ENCODE measurements at regions of chr1 and their contacts with region 1.

Region 1: DNA sequence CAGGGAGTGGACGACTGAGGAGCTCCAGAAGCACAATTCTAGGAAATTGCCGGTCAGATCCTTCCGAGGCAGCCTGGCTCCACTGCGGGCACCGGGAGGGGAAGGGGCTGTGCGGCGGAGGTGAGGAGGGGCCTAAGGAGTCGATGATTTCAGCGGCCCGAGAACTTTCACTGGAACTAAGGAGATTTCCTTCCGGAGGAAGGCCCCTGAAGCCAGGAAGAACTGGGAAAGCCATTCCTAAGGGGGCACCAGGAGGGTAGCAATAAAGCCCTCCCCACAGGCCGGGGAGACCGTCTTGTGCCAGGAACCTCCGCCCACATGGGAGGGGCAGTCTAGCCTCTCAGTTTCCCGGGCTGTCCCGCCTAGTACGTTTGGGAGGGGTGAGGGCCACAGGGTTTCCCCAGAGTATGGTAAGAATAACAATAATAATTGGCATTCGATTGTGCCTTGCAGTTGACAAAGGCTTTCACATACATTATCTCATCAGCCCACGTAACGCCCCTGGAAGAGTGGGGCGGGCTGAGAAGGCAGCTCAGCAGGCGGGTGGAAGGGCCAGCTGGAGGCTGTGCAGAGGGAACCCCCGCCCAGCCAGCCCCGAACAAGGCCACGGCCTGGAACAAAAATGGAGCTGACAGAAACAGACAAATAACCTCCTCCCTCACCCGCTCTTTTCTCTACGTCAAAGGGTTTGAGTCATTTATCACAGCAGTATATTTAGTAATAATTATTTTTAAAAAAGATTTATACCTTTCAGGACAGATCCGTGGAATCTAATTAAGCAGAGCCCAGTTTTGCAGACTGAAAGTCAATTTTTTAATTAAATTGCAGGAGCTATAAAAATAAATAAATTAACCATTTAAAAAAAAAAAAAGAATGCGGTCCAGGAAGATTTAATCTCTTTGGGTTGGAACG is 19.8 kb downstream of the NPR1 start:
- DNase-seq: no peak
- ATAC-seq: peak; percentile 37
- H3K4me3 ChIP-seq: no peak overlapping the region
- H3K4me3 Mint-ChIP-seq: peak overlapping the region in 4 of 10 donors; percentile 33 to 55 (median 48)
- H3K27ac ChIP-seq: no peak overlapping the region
- H3K27ac Mint-ChIP-seq: peak overlapping the region in 1 of 9 donors; percentile 53
- H3K4me1 ChIP-seq: no peaks in the 10 kb centered on the region
- H3K4me1 Mint-ChIP-seq: peaks cover 0 to 3% (median 0%) of the 10 kb centered on the region in 7 donors
- H3K27me3 ChIP-seq: no peaks in the 10 kb centered on the region
- H3K27me3 Mint-ChIP-seq: no peaks in the 10 kb centered on the region

Region 2: DNA sequence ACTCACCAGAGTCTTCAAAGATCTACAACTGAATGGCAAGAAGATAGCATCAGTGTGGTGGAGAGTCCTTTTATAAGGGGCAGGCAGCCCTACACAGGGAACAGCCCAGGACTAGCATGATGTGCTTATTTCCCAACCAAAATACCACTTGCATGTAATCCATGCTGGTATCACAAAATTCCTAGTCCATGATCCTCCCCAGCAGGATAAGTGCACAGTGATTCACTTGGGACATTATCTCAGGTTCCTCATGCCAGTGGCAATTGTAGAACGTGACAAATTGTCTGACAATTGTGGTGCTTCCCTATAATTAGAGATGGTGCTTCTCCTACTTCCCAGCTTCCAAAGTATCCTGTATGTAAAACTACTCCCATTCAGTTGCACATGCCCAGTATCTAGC is 547.4 kb before region 1 on chr1 and contains the start of gene SPRR2G:
- CTCF ChIA-PET with region 1: no interaction called
- POLR2A ChIA-PET with region 1: no interaction called
- intact Hi-C with region 1: no loop called
- DNase-seq: no peak
- ATAC-seq: no peak
- H3K4me3 ChIP-seq: no peak within 1 kb of the TSS
- H3K4me3 Mint-ChIP-seq: no peak within 1 kb of the TSS
- H3K27ac ChIP-seq: no peak within 1 kb of the TSS
- H3K27ac Mint-ChIP-seq: no peak within 1 kb of the TSS
- H3K4me1 ChIP-seq: no peaks in the 10 kb centered on the region
- H3K4me1 Mint-ChIP-seq: no peaks in the 10 kb centered on the region
- H3K27me3 ChIP-seq: no peaks in the 10 kb centered on the region
- H3K27me3 Mint-ChIP-seq: peaks cover 20 to 46% (median 43%) of the 10 kb centered on the region in 5 donors
- total RNA-seq, gene SPRR2G: not detected

Region 3: GRCh38 chr1:153490272-153491051 is 207.8 kb before region 1 on chr1:
- CTCF ChIA-PET with region 1: no interaction called
- POLR2A ChIA-PET with region 1: no interaction called
- intact Hi-C with region 1: no loop called
- DNase-seq: peak in 1 of 9 donors; percentile 41
- ATAC-seq: peak; percentile 54
- H3K4me3 ChIP-seq: no peak overlapping the region
- H3K4me3 Mint-ChIP-seq: no peak overlapping the region
- H3K27ac ChIP-seq: no peak overlapping the region
- H3K27ac Mint-ChIP-seq: peak overlapping the region in 1 of 9 donors; percentile 68
- H3K4me1 ChIP-seq: no peaks in the 10 kb centered on the region
- H3K4me1 Mint-ChIP-seq: peaks cover 0 to 8% (median 0%) of the 10 kb centered on the region in 7 donors
- H3K27me3 ChIP-seq: peaks cover 0 to 3% of the 10 kb centered on the region in 2 donors
- H3K27me3 Mint-ChIP-seq: peaks cover 6 to 28% (median 14%) of the 10 kb centered on the region in 5 donors

Region 4: GRCh38 chr1:153642161-153642560 is 56.1 kb before region 1 on chr1:
- CTCF ChIA-PET with region 1: no interaction called
- POLR2A ChIA-PET with region 1: no interaction called
- intact Hi-C with region 1: loop called in 1 of 2 experiments (anchors 2 kb)
- DNase-seq: no peak
- ATAC-seq: no peak
- H3K4me3 ChIP-seq: no peak overlapping the region
- H3K4me3 Mint-ChIP-seq: no peak overlapping the region
- H3K27ac ChIP-seq: no peak overlapping the region
- H3K27ac Mint-ChIP-seq: peak overlapping the region in 2 of 9 donors; percentile 66 to 69
- H3K4me1 ChIP-seq: peaks cover 0 to 12% of the 10 kb centered on the region in 2 donors
- H3K4me1 Mint-ChIP-seq: peaks cover 35 to 84% (median 67%) of the 10 kb centered on the region in 7 donors
- H3K27me3 ChIP-seq: no peaks in the 10 kb centered on the region
- H3K27me3 Mint-ChIP-seq: no peaks in the 10 kb centered on the region

Region 5: DNA sequence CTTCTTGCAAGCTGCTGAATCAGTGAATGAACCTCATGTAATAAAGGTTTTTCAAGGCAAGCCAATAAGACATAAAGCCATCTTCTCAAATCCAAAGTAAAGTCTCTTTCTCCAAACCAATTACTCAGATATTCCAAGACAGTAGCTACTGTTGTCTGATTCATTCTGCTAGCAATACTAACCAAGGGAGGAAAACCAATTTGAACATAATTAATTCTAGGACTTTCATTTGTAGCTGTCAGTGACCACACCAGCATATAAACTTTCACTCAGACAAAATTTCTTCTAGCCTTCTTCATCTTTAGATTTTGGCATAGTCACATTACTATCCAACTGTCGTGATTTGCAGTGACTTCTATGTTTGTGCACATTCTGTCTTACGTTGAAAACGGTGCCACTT is 19.1 kb after region 1 on chr1:
- CTCF ChIA-PET with region 1: no interaction called
- POLR2A ChIA-PET with region 1: no interaction called
- intact Hi-C with region 1: loop called in 1 of 2 experiments (anchors 1 kb)
- DNase-seq: no peak
- ATAC-seq: no peak
- H3K4me3 ChIP-seq: no peak overlapping the region
- H3K4me3 Mint-ChIP-seq: no peak overlapping the region
- H3K27ac ChIP-seq: no peak overlapping the region
- H3K27ac Mint-ChIP-seq: no peak overlapping the region
- H3K4me1 ChIP-seq: no peaks in the 10 kb centered on the region
- H3K4me1 Mint-ChIP-seq: no peaks in the 10 kb centered on the region
- H3K27me3 ChIP-seq: no peaks in the 10 kb centered on the region
- H3K27me3 Mint-ChIP-seq: peaks cover 0 to 15% (median 9%) of the 10 kb centered on the region in 5 donors

Region 6: GRCh38 chr1:155329971-155330598 is 1631.8 kb after region 1 on chr1:
- CTCF ChIA-PET with region 1: no interaction called
- POLR2A ChIA-PET with region 1: no interaction called
- intact Hi-C with region 1: no loop called
- DNase-seq: no peak
- ATAC-seq: no peak
- H3K4me3 ChIP-seq: no peak overlapping the region
- H3K4me3 Mint-ChIP-seq: no peak overlapping the region
- H3K27ac ChIP-seq: no peak overlapping the region
- H3K27ac Mint-ChIP-seq: peak overlapping the region in 3 of 9 donors; percentile 16 to 62 (median 42)
- H3K4me1 ChIP-seq: no peaks in the 10 kb centered on the region
- H3K4me1 Mint-ChIP-seq: peaks cover 6 to 12% (median 8%) of the 10 kb centered on the region in 7 donors
- H3K27me3 ChIP-seq: no peaks in the 10 kb centered on the region
- H3K27me3 Mint-ChIP-seq: no peaks in the 10 kb centered on the region